ENCODE measurements at regions of chr18 and their contacts with region 1.

Region 1: DNA sequence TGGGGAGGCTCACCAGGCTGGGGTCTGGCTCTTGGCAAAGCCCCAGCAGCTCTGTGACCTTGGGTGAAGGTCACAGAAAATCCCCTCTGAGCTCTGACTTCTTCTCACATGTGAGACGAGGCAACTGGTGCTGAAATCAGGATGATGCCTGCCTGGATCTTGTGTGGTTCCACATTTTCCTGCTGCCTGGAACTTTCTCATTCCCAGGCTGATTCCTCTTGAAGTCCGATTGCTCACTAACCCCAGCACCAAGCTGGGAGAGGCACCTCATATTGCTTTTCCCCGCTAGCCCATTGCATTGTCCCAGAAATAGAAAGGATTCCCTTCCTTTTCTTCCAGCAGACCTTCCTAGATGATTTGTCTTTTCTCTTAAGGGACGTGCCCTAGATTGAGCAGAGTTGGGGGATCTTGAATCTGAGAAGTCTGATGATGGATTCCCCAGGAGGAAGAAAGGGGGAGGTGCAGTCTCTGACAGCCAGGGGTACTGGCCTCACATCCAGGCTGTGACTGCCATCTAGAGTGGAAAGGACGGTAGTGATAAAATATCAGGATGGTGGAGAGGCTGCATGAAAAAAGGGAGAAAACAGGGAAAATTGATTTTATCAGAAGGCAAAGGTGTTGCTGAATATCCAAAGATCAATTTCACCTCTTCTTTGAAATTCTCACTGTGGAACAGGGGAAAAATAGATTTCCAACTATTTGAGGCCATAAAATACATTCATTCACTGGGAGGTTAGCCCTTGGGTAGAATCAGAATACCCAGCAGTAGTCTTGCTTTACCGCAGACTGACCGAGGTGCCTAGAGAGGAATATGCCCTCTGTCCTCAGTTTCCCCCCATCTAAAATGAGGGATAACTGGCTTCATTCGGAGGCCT is 96.3 kb downstream of the FAM210A start:
- DNase-seq: peak in 1 of 2 donors; percentile 33
- ATAC-seq: peak; percentile 87

Region 2: DNA sequence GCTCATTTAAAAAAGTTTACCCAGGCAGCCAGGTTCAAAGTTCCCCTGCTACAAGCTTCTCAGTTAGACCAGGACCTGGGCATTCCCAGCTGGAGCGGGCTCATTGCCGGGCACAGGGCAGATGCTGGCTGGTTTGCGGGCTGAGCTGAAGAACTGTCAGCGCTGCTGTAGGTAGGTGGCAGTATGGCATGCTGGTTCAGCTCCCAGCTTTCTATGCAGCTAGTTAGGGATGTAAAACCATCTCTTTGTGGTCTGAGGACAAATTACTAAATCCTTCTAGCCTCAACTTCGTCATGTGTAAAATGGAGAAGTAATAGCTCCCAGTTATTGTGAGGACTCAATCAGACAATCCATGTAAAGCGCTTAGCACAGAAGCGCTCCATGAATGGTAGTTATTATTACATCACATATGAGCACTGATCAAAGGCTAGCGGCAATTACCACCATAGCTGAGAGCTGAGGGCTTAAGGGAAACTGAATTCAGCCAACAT is 413.9 kb before region 1 on chr18:
- intact Hi-C with region 1: loop called in 1 of 2 experiments (anchors 2 kb)
- DNase-seq: peak; percentile 86 to 88
- ATAC-seq: peak; percentile 80